ENCODE measurements at regions of chr6 and their contacts with region 1.

Region 1: GRCh38 chr6:105733565-105734162 is 330.8 kb upstream of the PREP start:
- DNase-seq: peak; percentile 23
- H3K4me3 ChIP-seq: no peak overlapping the region
- H3K27ac ChIP-seq: no peak overlapping the region
- H3K4me1 ChIP-seq: no peaks in the 10 kb centered on the region
- H3K27me3 ChIP-seq: no peaks in the 10 kb centered on the region
- CTCF ChIP-seq: peak; percentile 77

Region 2: DNA sequence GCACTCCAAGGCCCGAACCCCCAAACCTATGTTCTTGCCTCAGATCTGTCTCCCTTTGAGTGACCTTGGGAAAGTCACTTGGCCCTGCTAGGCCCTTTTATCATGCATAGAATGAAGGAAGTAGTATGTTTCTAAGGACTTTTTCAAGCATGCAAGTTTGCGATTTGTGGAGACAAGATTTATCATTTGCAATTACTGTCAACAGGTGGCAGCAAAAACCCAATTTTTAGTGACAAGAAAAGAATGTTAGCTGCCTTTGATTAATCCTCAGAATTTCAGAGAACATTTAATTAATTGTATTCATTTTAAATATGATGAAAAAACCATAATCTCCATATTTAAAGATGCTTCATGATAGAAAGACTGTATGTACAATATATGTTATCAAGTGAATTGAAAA is 302.4 kb before region 1 on chr6:
- CTCF ChIA-PET with region 1: no interaction called
- POLR2A ChIA-PET with region 1: no interaction called
- intact Hi-C with region 1: loop called (anchors 5 kb)
- DNase-seq: peak; percentile 60
- H3K4me3 ChIP-seq: no peak overlapping the region
- H3K27ac ChIP-seq: no peak overlapping the region
- H3K4me1 ChIP-seq: peaks cover 13% of the 10 kb centered on the region
- H3K27me3 ChIP-seq: no peaks in the 10 kb centered on the region
- CTCF ChIP-seq: peak; percentile 71

Region 3: DNA sequence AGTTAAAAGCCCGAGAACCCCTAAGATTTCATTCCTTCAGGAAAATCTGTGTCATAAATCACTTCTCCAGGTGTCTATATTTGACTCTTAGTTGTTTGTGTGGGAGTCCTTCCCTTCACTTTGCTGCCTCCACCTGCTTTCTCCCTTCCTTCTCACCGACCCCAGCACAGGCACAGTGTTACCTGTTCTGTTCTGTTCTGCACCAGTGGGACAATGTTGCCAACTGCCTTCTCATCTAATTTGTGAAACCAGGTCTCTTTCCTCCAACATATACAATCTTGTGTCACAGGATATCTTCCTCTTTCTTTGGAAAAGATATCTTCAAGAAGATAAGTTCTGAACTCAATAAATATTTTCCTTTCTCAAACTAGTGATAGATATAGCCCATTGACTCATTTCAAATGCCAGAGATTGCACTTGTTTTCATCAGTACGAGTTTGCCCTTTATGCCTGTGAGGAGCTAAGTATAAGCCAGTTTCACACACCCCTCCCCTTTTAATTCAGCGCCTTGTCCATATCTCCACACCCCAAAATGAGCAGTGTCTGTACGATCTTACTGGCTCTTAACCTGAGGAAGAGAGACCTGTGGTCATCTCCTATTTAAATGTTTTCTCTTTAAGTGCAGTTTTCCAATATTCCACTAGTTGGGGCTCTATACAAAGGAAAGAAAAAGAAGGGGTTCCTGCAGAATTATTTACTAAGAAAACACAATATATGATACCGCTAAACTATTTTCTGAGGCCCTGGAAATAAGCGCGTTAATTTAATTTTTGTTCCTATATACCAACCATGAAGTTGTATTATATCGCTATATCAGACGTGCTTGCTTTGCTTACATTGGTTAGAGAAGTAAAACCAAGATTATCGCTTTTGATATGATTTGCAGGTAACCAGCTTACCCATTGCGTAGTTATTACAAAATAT is 249.2 kb before region 1 on chr6:
- CTCF ChIA-PET with region 1: no interaction called
- POLR2A ChIA-PET with region 1: no interaction called
- intact Hi-C with region 1: loop called (anchors 5 kb)
- DNase-seq: peak; percentile 66
- H3K4me3 ChIP-seq: no peak overlapping the region
- H3K27ac ChIP-seq: no peak overlapping the region
- H3K4me1 ChIP-seq: no peaks in the 10 kb centered on the region
- H3K27me3 ChIP-seq: no peaks in the 10 kb centered on the region
- CTCF ChIP-seq: peak; percentile 85

Region 4: DNA sequence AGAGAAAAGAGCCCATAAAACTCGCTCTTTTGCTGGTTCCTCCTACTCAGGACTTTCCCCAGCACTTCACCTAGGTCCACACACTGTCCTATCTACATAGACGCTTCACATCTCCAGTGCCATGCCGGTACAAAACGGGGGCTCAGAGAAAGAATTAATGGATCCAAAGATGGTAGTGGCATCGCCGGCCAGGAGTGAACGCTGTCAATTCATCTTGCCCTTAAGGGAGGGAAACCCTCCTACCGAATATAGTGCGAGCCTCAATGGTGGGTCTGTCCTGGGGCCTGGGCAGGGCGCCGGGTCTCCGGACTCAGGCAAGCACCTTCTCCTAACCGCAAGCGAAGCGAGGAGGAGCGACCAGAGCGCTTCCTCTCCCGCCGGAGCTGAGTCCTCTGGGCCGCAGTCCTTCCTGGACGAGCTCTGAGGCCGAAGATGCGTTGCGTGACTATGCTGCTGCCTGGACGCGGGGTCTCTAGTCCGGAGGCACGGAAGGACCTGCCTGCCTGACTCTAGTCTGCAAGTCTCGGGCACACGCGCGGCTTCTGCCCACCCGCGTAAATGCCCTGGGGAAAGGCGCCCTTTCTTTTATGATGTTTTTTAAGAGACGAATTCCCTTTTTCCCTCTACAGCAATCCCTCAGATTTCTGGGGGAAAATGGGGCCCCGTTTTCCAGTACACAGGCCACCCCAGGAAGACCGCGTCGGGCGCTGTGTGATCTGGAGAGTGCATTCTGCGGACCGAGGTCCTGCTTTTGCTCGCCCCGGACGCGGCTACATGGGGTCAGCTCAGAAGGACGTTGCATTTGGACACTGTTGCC is 252.4 kb after region 1 on chr6:
- CTCF ChIA-PET with region 1: no interaction called
- POLR2A ChIA-PET with region 1: no interaction called
- intact Hi-C with region 1: loop called (anchors 5 kb)
- DNase-seq: no peak
- H3K4me3 ChIP-seq: no peak overlapping the region
- H3K27ac ChIP-seq: no peak overlapping the region
- H3K4me1 ChIP-seq: no peaks in the 10 kb centered on the region
- H3K27me3 ChIP-seq: no peaks in the 10 kb centered on the region
- CTCF ChIP-seq: no peak

Region 5: DNA sequence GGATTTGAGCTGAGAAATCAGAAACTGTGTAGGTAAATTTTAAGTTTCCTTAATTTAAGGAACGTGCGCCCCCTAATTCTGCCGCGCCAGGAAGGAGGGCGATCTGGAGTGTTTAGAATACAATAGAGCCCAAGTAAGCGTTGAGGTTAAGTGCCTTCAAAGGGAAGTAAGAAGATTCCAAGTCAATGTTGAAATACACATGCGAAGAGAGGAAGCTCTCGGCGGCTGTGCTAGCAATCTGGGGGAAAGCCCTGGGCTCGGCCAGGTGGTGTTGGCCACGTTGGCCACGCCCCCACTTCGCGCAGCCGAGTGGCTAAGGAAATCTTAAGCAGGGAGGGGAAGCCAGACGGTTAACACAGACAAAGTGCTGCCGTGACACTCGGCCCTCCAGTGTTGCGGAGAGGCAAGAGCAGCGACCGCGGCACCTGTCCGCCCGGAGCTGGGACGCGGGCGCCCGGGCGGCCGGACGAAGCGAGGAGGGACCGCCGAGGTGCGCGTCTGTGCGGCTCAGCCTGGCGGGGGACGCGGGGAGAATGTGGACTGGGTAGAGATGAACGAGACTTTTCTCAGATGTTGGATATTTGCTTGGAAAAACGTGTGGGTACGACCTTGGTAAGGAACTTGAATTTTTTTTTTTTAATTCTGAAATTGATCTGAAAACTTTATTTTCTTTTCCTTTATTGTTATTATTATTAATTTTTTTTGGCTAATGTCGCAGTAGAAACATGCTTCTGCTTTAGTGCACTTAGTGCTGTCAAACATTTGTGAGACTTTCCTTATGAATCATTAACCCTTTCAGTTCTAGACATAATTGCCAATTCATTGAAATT is 352.5 kb after region 1 on chr6 and contains the start of gene PRDM1:
- CTCF ChIA-PET with region 1: no interaction called
- POLR2A ChIA-PET with region 1: no interaction called
- intact Hi-C with region 1: loop called (anchors 5 kb)
- DNase-seq: peak; percentile 49
- H3K4me3 ChIP-seq: peak within 1 kb of the TSS; percentile 49
- H3K27ac ChIP-seq: no peak within 1 kb of the TSS
- H3K4me1 ChIP-seq: peaks cover 14% of the 10 kb centered on the region
- H3K27me3 ChIP-seq: peaks cover 14% of the 10 kb centered on the region
- CTCF ChIP-seq: peak; percentile 31; the same call in 1 of the 2 replicates
- total RNA-seq, gene PRDM1: not detected in 2 replicates

Region 6: GRCh38 chr6:106167105-106167814 is 433.6 kb after region 1 on chr6:
- CTCF ChIA-PET with region 1: no interaction called
- POLR2A ChIA-PET with region 1: no interaction called
- intact Hi-C with region 1: no loop called
- DNase-seq: no peak
- H3K4me3 ChIP-seq: no peak overlapping the region
- H3K27ac ChIP-seq: no peak overlapping the region
- H3K4me1 ChIP-seq: no peaks in the 10 kb centered on the region
- H3K27me3 ChIP-seq: no peaks in the 10 kb centered on the region
- CTCF ChIP-seq: no peak

Region 7: DNA sequence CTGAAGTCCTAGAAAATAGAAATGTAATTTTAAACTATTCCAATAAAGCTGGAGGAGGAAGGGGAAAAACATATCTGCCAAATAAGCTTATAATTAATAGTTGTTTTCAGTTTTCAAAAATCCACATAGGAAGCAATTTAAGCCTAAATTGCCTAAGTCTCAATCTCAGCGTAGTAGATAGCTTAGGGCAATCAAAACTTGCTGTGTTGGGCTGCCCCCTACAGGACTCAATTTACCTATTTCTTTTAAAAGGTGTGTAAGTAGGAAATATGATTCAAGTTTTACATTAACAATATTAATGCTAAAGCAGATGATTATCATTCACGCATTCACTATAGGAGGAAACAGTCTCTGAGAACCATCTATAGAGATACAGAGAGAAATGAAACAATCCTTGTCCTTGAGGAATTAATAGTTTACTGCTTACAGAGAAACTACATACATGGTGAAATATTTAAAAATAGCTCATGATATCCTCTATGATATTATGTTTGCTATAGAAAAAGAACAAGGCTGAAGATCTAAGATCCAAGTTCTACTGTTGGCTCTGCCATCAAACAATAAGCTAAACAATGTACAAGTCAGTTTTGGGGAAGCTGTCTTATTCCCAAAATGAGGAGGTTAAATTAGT is 489.8 kb after region 1 on chr6:
- CTCF ChIA-PET with region 1: no interaction called
- POLR2A ChIA-PET with region 1: no interaction called
- intact Hi-C with region 1: loop called (anchors 2 kb)
- DNase-seq: peak; percentile 67
- H3K4me3 ChIP-seq: no peak overlapping the region
- H3K27ac ChIP-seq: no peak overlapping the region
- H3K4me1 ChIP-seq: peaks cover 5% of the 10 kb centered on the region
- H3K27me3 ChIP-seq: no peaks in the 10 kb centered on the region
- CTCF ChIP-seq: peak; percentile 74

Region 8: GRCh38 chr6:106300944-106301343 is 567.3 kb after region 1 on chr6:
- CTCF ChIA-PET with region 1: no interaction called
- POLR2A ChIA-PET with region 1: no interaction called
- intact Hi-C with region 1: loop called (anchors 2 kb)
- DNase-seq: peak; percentile 54
- H3K4me3 ChIP-seq: no peak overlapping the region
- H3K27ac ChIP-seq: no peak overlapping the region
- H3K4me1 ChIP-seq: peaks cover 11% of the 10 kb centered on the region
- H3K27me3 ChIP-seq: no peaks in the 10 kb centered on the region
- CTCF ChIP-seq: peak; percentile 63